HEK293 (cell line): ENCODE measurements at regions of chr11 and their contacts with region 1.

Region 1: GRCh38 chr11:11640996-11641395 is 19.2 kb upstream of the GALNT18 start:
- H3K4me3 ChIP-seq: no peak overlapping the region
- H3K27ac ChIP-seq: no peak overlapping the region
- H3K4me1 ChIP-seq: no peaks in the 10 kb centered on the region
- CTCF ChIP-seq: no peak

Region 2: DNA sequence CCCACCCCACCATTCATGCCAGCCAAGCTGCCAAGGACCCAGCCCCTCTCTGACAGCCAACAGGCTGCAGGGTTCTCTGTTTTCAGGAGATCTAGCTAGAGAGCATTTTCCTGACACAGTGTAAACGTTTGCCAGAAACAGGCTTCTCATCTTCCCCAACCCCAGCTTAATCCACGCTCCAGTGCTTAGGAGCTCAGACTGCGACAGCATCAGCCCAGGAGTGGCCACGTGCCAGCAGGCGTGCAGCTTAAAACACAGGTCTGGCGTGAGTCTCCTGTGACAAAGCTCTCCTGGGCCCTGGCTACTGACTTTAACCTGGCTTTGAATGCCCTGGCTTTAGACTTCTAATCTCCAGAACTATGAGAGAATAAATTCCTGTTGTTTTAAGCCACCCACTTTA is 85.8 kb before region 1 on chr11:
- CTCF ChIA-PET with region 1: no interaction called
- POLR2A ChIA-PET with region 1: no interaction called
- H3K4me3 ChIP-seq: no peak overlapping the region
- H3K27ac ChIP-seq: no peak overlapping the region
- H3K4me1 ChIP-seq: no peaks in the 10 kb centered on the region
- CTCF ChIP-seq: no peak

Region 3: GRCh38 chr11:11621573-11622319 is 19.2 kb before region 1 on chr11 and contains the start of gene GALNT18:
- CTCF ChIA-PET with region 1: interaction called, 10 read pairs
- POLR2A ChIA-PET with region 1: no interaction called
- H3K4me3 ChIP-seq: peak within 1 kb of the TSS; percentile 48
- H3K27ac ChIP-seq: peak within 1 kb of the TSS; percentile 10; the same call in 1 of the 2 replicates
- H3K4me1 ChIP-seq: no peaks in the 10 kb centered on the region
- CTCF ChIP-seq: peak; percentile 84